Activated CD8-positive, alpha-beta memory T cell treated with anti-CD3 and anti-CD28 coated beads, Interleukin-2, amount 10 ng/mL, durations not matched to agents 7 days and 5 days (primary cell): ENCODE measurements at regions of chr14 and their contacts with region 1.

Region 1: DNA sequence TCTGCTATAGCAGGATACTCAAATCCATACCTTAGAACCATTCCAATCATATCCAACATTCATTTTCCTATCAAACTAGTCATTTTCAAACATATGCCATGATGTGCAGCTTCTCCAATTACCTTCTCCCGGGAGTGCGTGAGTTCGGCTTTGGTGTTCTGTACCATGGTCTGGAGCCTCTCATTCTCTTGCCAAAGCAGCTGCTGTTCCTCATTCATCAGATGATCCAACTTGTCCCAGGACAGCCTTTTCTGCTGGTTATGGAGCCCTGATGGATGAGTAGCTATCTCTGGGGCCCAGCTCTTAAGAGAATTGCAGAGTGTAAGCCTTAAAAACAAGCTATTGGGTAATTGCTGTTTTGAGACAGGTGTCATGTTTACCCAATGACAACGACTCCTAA is 71.1 kb upstream of the SAV1 start:
- DNase-seq: no peak
- ATAC-seq: no peak
- H3K4me3 Mint-ChIP-seq: no peak overlapping the region
- H3K27ac Mint-ChIP-seq: peak overlapping the region; percentile 85
- H3K4me1 Mint-ChIP-seq: peaks cover 52% of the 10 kb centered on the region
- H3K27me3 Mint-ChIP-seq: no peaks in the 10 kb centered on the region

Region 2: DNA sequence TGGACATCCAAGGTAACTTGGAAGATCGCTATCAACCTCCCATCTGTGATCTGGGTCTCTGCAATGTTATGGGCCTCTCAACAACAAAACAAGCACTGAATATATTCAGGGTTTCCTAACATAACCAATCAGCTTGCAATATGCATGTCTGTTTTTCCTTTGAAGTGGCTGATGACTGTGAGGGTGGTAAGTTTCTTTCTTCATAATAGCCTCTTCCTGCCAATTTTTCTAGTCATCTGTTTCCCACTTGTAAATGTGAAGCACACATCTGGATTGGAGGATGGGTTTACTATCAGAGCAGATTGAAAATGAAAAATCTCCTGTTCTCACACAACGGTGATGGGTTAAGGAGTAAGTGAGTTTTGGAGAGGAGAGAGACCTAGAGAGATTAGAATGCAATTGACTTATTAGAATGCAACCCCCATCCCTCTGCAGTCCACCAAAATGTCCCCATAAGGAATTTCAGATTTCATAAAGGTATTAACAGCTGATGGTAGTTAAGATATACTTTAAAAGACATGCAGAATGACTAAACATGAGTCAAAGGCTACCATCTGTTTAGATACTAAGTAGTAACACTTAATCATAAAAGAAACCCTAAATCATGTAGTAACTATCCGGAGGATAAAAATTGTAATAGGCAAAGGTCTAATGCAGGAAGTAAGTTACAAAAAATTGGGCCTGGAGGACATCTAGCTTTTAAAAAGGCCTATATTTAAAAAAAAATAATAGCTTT is 12.6 kb before region 1 on chr14:
- CTCF ChIA-PET with region 1: interaction called, 10 read pairs
- DNase-seq: no peak
- ATAC-seq: peak; percentile 90
- H3K4me3 Mint-ChIP-seq: peak overlapping the region; percentile 56
- H3K27ac Mint-ChIP-seq: peak overlapping the region; percentile 84
- H3K4me1 Mint-ChIP-seq: peaks cover 28% of the 10 kb centered on the region
- H3K27me3 Mint-ChIP-seq: no peaks in the 10 kb centered on the region